ENCODE measurements at regions of chr1 and their contacts with region 1.

Region 1: DNA sequence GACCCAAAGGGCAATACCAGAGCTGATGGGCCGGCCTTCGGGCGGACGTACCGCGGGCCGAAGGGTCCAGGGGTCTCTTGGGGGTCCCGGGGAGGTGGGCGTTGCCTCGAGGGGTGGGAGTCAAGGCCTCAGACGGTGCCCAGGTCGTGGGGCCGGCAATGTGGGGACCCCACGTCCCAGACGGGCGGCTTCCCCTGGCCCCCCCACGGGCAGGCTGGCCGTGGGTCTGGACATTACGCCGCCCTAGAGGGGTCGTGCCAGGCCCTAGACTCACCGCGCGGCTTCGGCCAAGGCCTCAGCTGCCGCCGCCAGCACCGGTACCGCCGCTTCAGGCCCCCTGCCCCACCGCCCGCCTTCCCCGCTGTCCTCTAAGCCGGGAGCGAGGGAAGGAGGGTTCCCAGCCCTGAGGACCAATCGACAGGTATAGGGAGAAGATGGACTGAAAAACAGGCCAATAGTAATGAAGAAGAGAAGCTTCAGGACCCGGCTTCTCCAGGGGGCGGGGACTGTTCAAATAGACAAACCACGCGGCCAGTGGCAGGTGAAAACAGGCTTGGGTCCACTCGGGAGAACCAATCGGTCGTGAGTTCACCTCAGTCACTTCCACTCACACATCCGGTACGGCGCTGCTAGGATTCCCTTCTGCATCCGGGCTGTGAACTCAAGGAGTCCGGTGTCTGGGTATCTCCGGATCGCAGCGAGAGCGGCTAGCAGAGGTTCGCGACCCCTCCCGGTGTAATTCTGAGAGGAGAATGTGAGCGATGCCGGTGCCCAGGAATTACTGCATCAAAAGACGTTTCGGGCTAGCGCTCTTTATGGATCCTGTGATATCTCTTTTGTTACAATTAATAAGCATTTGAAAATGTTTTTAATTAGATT is at the start of gene MTOR:
- DNase-seq: peak; percentile 99
- ATAC-seq: peak; percentile 98
- H3K4me3 Mint-ChIP-seq: peak within 1 kb of the TSS; percentile 84
- H3K27ac Mint-ChIP-seq: peak within 1 kb of the TSS; percentile 88
- H3K4me1 Mint-ChIP-seq: peaks cover 13% of the 10 kb centered on the region
- H3K27me3 Mint-ChIP-seq: peaks cover 1% of the 10 kb centered on the region
- CTCF ChIP-seq: peak; percentile 29
- total RNA-seq, gene MTOR: 34.7 to 36.8 TPM

Region 2: DNA sequence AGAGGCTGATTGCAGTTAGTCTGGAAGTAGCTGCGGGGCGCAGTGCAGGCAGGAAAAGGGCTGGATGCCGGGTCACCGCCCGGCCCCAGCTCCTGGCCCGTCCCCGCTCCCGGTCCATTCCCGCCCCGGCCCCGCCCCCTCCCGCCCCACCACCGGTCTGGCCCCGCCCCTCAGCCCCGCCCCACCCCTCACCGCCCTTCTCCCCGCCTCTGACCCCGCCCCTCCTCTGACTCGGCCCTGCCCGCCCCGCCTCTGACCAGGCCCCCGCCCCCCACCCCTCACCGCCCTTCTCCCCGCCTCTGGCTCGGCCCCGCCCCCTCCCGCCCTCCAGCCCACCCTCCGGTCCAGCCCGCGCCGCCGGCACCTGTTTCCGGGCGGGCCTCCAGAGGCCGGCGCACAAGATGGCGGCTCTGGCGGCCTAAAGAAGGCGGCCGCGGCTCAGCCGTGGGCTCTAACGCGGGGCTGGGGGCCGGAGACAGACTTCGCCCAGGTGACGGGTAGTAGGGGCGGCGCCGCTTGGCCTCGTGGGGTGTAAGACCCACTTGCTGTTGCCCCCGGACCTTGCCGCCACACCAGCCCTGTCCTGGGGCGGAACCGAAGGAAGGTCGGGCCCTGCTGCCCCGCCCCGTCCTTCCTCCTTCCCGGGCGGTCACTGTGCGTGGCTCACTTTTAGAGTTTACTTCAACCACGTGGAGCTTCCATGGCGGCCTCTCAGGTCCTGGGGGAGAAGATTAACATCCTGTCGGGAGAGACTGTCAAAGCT is 10.6 kb after region 1 on chr1 and contains the start of gene UBIAD1:
- CTCF ChIA-PET with region 1: interaction called, 8 read pairs
- POLR2A ChIA-PET with region 1: interaction called, 34 read pairs
- intact Hi-C with region 1: no loop called
- DNase-seq: peak; percentile 85
- ATAC-seq: peak; percentile 89
- H3K4me3 Mint-ChIP-seq: peak within 1 kb of the TSS; percentile 99
- H3K27ac Mint-ChIP-seq: peak within 1 kb of the TSS; percentile 92
- H3K4me1 Mint-ChIP-seq: peaks cover 29% of the 10 kb centered on the region
- H3K27me3 Mint-ChIP-seq: no peaks in the 10 kb centered on the region
- CTCF ChIP-seq: no peak
- total RNA-seq, gene UBIAD1: 24.0 to 26.2 TPM

Region 3: GRCh38 chr1:11448375-11449099 is 186.1 kb after region 1 on chr1:
- CTCF ChIA-PET with region 1: no interaction called
- POLR2A ChIA-PET with region 1: no interaction called
- intact Hi-C with region 1: no loop called
- DNase-seq: no peak
- ATAC-seq: no peak
- H3K4me3 Mint-ChIP-seq: no peak overlapping the region
- H3K27ac Mint-ChIP-seq: no peak overlapping the region
- H3K4me1 Mint-ChIP-seq: no peaks in the 10 kb centered on the region
- H3K27me3 Mint-ChIP-seq: no peaks in the 10 kb centered on the region
- CTCF ChIP-seq: no peak